PC-3 (cell line): ENCODE measurements at regions of chr21 and their contacts with region 1.

Region 1: GRCh38 chr21:43287111-43287759 is 118.4 kb downstream of the CRYAA start:
- DNase-seq: peak; percentile 87
- ATAC-seq: peak; percentile 79
- H3K4me3 ChIP-seq: peak overlapping the region; percentile 39; the same call in 1 of the 2 replicates
- H3K27ac ChIP-seq: peak overlapping the region; percentile 98
- H3K4me1 ChIP-seq: peaks cover 32% of the 10 kb centered on the region
- H3K27me3 ChIP-seq: no peaks in the 10 kb centered on the region
- CTCF ChIP-seq: peak; percentile 16; the same call in 1 of the 2 replicates

Region 2: GRCh38 chr21:42245331-42246193 is 1041.7 kb before region 1 on chr21:
- CTCF ChIA-PET with region 1: no interaction called
- POLR2A ChIA-PET with region 1: no interaction called
- intact Hi-C with region 1: no loop called
- DNase-seq: no peak
- ATAC-seq: no peak
- H3K4me3 ChIP-seq: no peak overlapping the region
- H3K27ac ChIP-seq: no peak overlapping the region
- H3K4me1 ChIP-seq: no peaks in the 10 kb centered on the region
- H3K27me3 ChIP-seq: peaks cover 25% of the 10 kb centered on the region; the same call in 1 of the 2 replicates
- CTCF ChIP-seq: no peak

Region 3: DNA sequence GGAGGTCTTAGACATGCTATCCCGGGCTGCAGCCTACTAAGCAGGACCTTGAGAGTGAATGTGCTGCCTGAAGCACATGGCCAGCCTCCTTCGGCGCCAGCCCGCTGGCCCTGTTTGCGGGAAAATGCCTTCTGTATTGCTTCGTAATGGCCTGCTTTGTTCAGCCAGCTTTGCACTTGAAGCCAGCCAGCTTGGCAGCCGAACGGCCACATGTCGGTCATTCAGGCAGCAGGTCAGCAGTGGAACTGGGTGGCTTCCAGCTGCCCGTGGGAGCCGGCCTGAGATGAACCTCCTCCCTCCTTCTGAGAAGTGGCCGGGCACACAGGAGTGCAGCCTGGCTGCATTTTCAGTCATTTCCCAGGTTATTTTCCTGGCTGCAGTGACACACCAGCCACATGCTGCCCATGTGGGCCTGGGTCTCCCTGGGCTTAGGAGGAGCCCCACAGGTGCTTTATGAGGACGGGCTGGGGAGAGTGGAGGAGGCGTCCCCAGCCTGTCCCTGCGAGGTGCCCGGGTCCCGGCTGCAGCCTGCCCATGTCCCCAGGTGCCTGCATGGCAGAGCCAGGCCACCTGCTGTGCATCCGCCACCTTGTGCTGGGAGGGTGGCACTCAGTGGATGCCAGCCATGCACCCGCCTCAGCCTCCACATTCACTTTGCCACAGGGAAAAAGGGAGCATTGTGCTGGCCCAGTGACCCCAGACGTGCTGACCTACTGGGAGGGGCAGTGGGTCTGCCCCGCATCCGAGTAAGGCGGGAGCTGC is 36.2 kb after region 1 on chr21:
- CTCF ChIA-PET with region 1: no interaction called
- POLR2A ChIA-PET with region 1: no interaction called
- intact Hi-C with region 1: no loop called
- DNase-seq: no peak
- ATAC-seq: no peak
- H3K4me3 ChIP-seq: no peak overlapping the region
- H3K27ac ChIP-seq: no peak overlapping the region
- H3K4me1 ChIP-seq: peaks cover 9% of the 10 kb centered on the region
- H3K27me3 ChIP-seq: no peaks in the 10 kb centered on the region
- CTCF ChIP-seq: no peak

Region 4: DNA sequence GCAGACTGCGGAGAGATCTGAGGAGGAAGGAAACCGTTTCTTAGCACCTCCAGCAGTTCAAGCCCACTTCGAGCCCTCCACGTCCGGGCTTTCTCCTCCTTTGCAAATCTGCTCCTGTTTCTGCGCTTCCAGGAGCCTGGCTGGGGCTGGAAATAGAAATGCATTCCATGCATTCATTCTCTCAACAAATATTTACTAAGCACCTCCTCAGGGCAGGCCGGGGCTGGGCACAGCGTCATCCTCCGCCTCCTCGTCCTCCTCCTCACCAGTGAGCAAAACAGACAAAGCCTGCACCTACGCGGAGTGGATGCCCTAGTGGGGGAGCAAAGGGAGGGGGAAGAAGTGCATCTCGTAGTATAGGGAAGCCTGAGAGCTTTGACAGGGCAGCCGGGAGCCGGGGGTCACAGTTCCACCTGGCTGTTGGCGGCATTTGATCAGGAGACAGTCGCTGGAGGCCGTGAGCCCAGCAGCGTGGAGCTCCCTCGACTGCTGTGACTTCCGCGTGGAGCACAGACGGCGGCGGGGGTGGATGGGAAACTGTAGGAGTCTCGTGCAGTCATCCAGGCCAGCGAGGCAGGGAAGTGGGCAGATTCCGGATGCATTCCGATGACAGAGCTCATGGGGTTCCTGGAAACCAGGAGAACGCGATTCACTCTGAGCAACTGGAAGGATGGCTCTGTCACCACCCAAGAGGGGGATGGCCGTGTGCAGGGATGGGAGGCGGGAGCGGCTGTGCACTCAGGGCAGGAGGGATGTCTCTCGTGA is 46.2 kb after region 1 on chr21:
- CTCF ChIA-PET with region 1: no interaction called
- POLR2A ChIA-PET with region 1: interaction called, 3 read pairs
- intact Hi-C with region 1: loop called (anchors 1 kb)
- DNase-seq: peak; percentile 95
- ATAC-seq: peak; percentile 92
- H3K4me3 ChIP-seq: peak overlapping the region; percentile 62
- H3K27ac ChIP-seq: peak overlapping the region; percentile 97
- H3K4me1 ChIP-seq: peaks cover 29% of the 10 kb centered on the region
- H3K27me3 ChIP-seq: no peaks in the 10 kb centered on the region
- CTCF ChIP-seq: no peak

Region 5: GRCh38 chr21:43345746-43346409 is 58.6 kb after region 1 on chr21:
- CTCF ChIA-PET with region 1: no interaction called
- POLR2A ChIA-PET with region 1: interaction called, 3 read pairs
- intact Hi-C with region 1: loop called (anchors 2 kb)
- DNase-seq: peak; percentile 59
- ATAC-seq: peak; percentile 20
- H3K4me3 ChIP-seq: no peak overlapping the region
- H3K27ac ChIP-seq: no peak overlapping the region
- H3K4me1 ChIP-seq: peaks cover 32% of the 10 kb centered on the region
- H3K27me3 ChIP-seq: no peaks in the 10 kb centered on the region
- CTCF ChIP-seq: no peak